ENCODE measurements at regions of chr18 and their contacts with region 1.

Region 1: GRCh38 chr18:30271716-30272115 is 770.8 kb downstream of the DSC3 start:
- ATAC-seq: peak in 2 of 8 experiments; percentile 42 to 75
- H3K4me3 ChIP-seq: no peak overlapping the region
- H3K27ac ChIP-seq: no peak overlapping the region
- H3K4me1 ChIP-seq: no peaks in the 10 kb centered on the region

Region 2: GRCh38 chr18:29862824-29863223 is 408.9 kb before region 1 on chr18:
- in situ Hi-C with region 1: loop called in 1 of 9 experiments (anchors 10 kb)
- ATAC-seq: no peak
- H3K4me3 ChIP-seq: no peak overlapping the region
- H3K27ac ChIP-seq: no peak overlapping the region
- H3K4me1 ChIP-seq: no peaks in the 10 kb centered on the region

Region 3: GRCh38 chr18:29874519-29875098 is 397.1 kb before region 1 on chr18:
- in situ Hi-C with region 1: loop called in 2 of 9 experiments (anchors 10 to 25 kb)
- ATAC-seq: peak in 2 of 8 experiments; percentile 52 to 76
- H3K4me3 ChIP-seq: no peak overlapping the region
- H3K27ac ChIP-seq: no peak overlapping the region
- H3K4me1 ChIP-seq: no peaks in the 10 kb centered on the region

Region 4: DNA sequence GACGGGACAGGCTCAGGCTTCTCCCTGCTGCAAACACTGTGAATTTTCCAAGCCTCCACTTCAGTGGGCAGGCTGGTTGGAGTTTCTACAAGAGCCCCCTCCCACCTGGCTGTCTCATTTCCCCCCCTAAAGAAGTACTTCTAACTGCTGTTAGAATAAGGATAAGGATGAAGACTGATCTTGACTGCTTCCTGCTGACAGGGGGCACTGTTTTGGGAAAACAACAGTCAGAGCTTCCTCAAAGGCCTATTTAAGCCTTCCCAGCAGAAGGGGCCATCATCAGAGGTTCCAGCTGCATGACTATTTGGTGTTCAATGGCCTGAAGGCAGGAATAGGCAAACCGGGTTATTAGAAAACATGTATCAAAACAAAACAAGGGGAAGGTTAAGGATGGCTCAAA is 392.0 kb before region 1 on chr18:
- in situ Hi-C with region 1: loop called in 2 of 9 experiments (anchors 10 to 25 kb)
- ATAC-seq: no peak
- H3K4me3 ChIP-seq: no peak overlapping the region
- H3K27ac ChIP-seq: no peak overlapping the region
- H3K4me1 ChIP-seq: no peaks in the 10 kb centered on the region

Region 5: DNA sequence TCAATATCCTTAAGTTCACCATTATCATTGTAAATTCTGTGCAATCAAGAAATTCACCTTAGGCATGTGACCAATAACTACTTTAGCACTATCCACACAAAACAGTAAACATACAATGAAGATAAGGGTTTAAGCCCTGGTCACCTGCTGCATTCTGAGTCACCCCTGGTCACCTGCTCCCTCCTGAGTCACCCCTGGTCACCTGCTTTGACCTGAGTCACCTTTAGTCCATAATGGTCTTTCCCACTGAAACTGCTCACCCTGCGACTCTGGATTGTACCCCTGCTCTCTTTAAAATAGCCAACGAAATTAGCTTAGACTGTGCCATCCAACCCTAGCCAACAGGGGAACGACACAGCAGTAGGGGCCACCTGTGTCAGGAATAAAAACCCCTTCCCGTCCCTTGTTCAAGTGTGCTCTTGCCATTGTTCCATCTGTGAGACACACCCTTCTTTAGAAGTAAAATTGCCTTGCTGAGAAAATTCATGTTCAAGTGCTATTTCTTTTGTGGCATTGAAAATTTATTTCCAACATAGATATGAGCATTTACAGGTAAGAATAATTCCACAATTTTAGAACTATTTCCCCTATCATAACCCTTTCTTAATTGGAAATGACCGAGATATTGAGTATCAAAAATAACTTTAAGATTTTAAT is 132.0 kb before region 1 on chr18:
- in situ Hi-C with region 1: no loop called
- ATAC-seq: no peak
- H3K4me3 ChIP-seq: no peak overlapping the region
- H3K27ac ChIP-seq: no peak overlapping the region
- H3K4me1 ChIP-seq: no peaks in the 10 kb centered on the region

Region 6: DNA sequence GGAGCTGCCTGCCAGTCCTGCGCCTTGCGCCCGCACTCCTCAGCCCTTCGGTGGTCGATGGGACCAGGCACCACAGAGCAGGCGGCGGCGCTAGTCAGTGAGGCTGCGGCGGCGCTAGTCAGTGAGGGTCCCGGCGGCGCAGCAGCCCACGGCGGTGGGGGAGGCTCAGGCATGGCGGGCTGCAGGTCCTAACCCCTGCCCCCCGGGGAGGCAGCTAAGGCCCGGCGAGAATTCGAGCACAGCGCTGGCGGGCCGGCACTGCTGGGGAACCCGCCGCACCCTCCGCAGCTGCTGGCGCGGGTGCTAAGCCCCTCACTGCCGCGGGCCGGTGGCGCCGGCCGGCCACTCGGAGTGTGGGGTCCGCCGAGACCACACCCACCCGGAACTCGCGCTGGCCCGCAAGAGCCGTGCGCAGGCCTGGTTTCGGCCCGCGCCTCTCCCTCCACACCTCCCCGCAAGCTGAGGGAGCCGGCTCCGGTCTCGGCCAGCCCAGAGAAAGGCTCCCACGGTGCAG is 96.6 kb before region 1 on chr18:
- in situ Hi-C with region 1: no loop called
- ATAC-seq: no peak
- H3K4me3 ChIP-seq: no peak overlapping the region
- H3K27ac ChIP-seq: no peak overlapping the region
- H3K4me1 ChIP-seq: no peaks in the 10 kb centered on the region

Measured in motor neuron (in vitro differentiated cells).